ENCODE measurements at regions of chr17 and their contacts with region 1.

Region 1: GRCh38 chr17:70552230-70552981 is 383.1 kb downstream of the KCNJ2 start:
- DNase-seq: peak; percentile 34 to 59 (median 54)
- H3K4me3 ChIP-seq: no peak overlapping the region
- H3K4me3 Mint-ChIP-seq: no peak overlapping the region
- H3K27ac ChIP-seq: no peak overlapping the region
- H3K27ac Mint-ChIP-seq: no peak overlapping the region
- H3K4me1 ChIP-seq: no peaks in the 10 kb centered on the region
- H3K4me1 Mint-ChIP-seq: peaks cover 2% of the 10 kb centered on the region
- H3K27me3 ChIP-seq: no peaks in the 10 kb centered on the region
- H3K27me3 Mint-ChIP-seq: peaks cover 0 to 3% (median 2%) of the 10 kb centered on the region in 3 donors
- CTCF ChIP-seq: peak; percentile 76

Region 2: GRCh38 chr17:69567130-69567529 is 985.3 kb before region 1 on chr17:
- intact Hi-C with region 1: loop called (anchors 5 to 10 kb)
- DNase-seq: no peak
- H3K4me3 ChIP-seq: no peak overlapping the region
- H3K4me3 Mint-ChIP-seq: no peak overlapping the region
- H3K27ac ChIP-seq: no peak overlapping the region
- H3K27ac Mint-ChIP-seq: peak overlapping the region in 1 of 7 donors; percentile 77
- H3K4me1 ChIP-seq: peaks cover 0 to 5% of the 10 kb centered on the region in 2 donors
- H3K4me1 Mint-ChIP-seq: peaks cover 8% of the 10 kb centered on the region
- H3K27me3 ChIP-seq: no peaks in the 10 kb centered on the region
- H3K27me3 Mint-ChIP-seq: peaks cover 2 to 12% (median 8%) of the 10 kb centered on the region in 3 donors
- CTCF ChIP-seq: no peak

Region 3: DNA sequence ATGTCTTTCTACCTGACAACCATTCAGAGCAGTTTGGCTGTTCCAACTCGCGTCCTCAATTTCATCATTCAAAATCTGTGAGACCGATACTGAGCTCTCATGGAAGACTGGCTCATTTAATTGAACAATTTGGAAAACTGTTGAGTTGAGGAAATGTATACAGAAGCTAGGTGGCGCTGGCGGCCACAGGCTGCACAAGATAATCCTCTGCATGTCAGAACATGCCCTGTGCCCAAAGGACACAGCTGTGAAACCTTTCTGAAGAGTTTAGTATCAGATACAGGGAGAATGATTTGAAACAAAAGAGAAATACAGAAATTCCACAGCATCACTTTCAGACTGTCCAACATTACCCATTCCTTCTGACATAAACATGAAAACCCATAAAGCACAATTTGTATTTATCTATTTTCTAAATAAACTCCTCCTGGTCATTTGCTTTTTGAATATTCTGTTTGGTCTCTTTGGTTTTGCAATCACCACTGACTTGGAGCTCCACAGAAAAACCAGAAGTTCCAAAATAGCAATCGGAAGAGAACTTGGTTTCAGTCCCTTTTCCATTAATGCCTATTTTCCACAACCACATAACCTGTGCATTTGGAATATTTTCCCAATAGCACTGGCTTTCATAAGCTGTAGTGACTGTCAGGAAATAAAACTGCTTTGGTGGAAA is 945.1 kb before region 1 on chr17:
- intact Hi-C with region 1: loop called in 1 of 2 experiments (anchors 10 kb)
- DNase-seq: peak; percentile 13 to 28 (median 19)
- H3K4me3 ChIP-seq: no peak overlapping the region
- H3K4me3 Mint-ChIP-seq: peak overlapping the region in 1 of 2 donors; percentile 71
- H3K27ac ChIP-seq: peak overlapping the region in 1 of 2 donors; percentile 63
- H3K27ac Mint-ChIP-seq: peak overlapping the region in 1 of 7 donors; percentile 74
- H3K4me1 ChIP-seq: peaks cover 26 to 28% of the 10 kb centered on the region in 2 donors
- H3K4me1 Mint-ChIP-seq: peaks cover 33% of the 10 kb centered on the region
- H3K27me3 ChIP-seq: no peaks in the 10 kb centered on the region
- H3K27me3 Mint-ChIP-seq: peaks cover 0 to 2% (median 0%) of the 10 kb centered on the region in 3 donors
- CTCF ChIP-seq: peak; percentile 79

Measured in CD14-positive monocyte (primary cell).